Endothelial cell of umbilical vein (primary cell): ENCODE measurements at regions of chr5 and their contacts with region 1.

Region 1: DNA sequence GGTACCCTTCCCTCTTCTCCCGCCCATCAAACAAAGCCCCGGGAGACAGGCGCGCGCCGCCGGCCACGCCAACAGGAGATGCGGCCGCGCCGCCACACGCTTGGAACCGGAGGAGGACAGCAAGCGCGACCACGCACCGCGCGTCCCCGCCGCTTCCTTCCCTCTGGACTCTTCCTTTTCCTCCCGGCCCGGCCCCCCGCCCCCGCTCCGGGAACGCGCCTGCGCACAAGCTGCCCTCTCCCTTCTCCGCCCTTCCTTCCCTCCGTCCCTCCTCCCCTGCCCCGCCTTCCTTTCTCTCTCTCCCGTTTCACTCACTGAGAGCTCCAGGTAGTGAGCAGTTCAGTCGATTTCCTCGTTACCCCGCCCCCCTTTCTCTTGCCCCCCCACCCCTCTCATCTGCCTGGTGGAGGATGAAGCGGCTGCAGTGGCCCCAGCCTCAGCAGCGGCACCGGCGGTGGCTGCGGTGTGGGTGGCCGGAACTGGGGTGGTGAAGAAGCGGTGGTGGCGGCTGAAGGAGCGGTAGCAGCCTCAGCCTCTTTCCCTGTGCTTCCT is at the start of gene RASA1:
- DNase-seq: peak; percentile 92
- H3K4me3 ChIP-seq: peak within 1 kb of the TSS; percentile 89 to 92 (median 92)
- H3K27ac ChIP-seq: peak within 1 kb of the TSS; percentile 77
- H3K4me1 ChIP-seq: peaks cover 13% of the 10 kb centered on the region
- H3K27me3 ChIP-seq: peaks cover 0 to 2% of the 10 kb centered on the region in 2 experiments
- CTCF ChIP-seq: no peak
- POLR2A ChIP-seq: peak; percentile 99
- total RNA-seq, gene RASA1: 42.0 and 42.7 TPM in 2 replicates

Region 2: DNA sequence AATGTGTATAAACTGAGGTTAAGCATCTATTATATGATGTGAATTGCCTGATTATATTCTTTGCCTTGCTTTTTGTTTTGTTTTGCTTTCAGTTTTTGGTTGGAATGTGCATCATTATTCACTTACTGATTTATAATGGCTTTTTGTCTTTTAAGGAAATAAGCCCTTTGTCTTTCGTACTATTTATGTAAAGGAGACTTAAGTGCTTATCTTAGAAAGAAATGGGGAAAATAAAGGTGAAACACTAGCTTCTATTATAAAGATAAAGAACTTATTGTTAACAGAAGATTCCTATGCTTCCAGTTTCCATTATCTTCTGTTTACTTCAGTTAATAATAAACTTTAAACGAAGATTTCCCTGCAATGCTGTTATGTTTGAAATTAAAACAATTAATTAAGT is 626.7 kb before region 1 on chr5:
- CTCF ChIA-PET with region 1: no interaction called
- POLR2A ChIA-PET with region 1: no interaction called
- dilution Hi-C with region 1: no loop called
- intact Hi-C with region 1: no loop called
- DNase-seq: no peak
- H3K4me3 ChIP-seq: no peak overlapping the region
- H3K27ac ChIP-seq: no peak overlapping the region
- H3K4me1 ChIP-seq: no peaks in the 10 kb centered on the region
- H3K27me3 ChIP-seq: no peaks in the 10 kb centered on the region
- CTCF ChIP-seq: no peak
- POLR2A ChIP-seq: no peak

Region 3: DNA sequence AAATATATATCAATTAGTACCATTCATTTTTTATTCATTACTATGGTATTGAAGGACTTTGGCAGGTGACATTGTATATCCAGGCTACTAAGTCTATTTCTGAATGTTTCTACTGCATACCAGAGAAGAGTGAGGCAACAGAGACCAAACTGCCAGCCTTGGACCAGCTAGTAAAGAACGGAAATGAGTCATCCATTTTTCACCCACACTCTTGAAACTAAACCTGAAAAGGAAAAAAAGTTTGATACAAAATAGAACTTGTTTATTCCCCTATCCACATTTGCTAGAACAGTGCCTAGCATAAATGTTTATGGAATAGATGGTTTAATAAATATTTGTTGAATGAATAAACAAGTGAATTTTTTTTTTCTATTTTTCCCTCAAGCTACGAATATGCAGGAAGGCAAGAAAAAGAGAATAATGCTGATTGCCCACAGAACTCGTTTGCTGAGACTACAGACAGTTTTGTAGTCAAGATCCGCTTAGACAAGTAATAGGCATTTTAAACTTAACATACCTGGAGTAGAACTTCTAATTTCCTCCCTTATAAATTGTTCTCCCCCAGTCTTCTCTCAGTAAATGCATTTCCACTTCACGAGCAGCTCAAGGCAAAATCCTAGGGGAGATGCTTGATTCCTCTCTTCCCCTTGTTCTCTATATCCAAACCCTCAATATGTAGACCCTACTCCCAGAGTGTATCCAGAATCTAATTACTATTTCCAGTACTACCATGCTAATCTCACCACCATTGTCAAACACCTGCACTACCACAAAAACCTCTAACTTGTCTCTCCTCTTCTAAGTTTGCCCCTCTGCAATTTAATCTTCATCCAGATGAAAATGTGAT is 146.1 kb before region 1 on chr5:
- CTCF ChIA-PET with region 1: interaction called, 3 read pairs
- POLR2A ChIA-PET with region 1: interaction called, 4 read pairs
- dilution Hi-C with region 1: no loop called
- intact Hi-C with region 1: loop called (anchors 1 kb)
- DNase-seq: peak; percentile 89
- H3K4me3 ChIP-seq: peak overlapping the region in 1 of 3 experiments; percentile 2
- H3K27ac ChIP-seq: peak overlapping the region; percentile 98
- H3K4me1 ChIP-seq: peaks cover 30% of the 10 kb centered on the region
- H3K27me3 ChIP-seq: no peaks in the 10 kb centered on the region
- CTCF ChIP-seq: no peak
- POLR2A ChIP-seq: no peak

Region 4: DNA sequence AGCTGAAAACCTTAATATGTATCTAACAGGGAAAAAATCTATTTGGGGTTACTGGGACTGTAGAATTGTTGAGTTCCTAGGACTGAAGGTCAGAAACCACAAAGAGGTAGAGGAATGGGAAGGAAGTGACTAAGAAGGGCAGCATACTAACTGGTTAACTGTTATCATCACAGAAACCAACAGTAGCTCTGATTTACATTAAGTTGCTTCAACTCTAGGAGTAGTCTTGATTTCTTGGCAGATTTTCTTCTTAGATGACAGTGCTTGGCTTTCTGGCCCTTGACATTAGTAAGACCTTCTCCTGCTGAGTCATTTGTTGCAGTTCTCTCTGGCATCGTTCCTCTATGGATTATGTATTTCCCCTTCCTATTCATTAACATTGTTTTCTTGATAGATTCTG is 116.1 kb before region 1 on chr5:
- CTCF ChIA-PET with region 1: interaction called, 6 read pairs
- POLR2A ChIA-PET with region 1: interaction called, 4 read pairs
- dilution Hi-C with region 1: no loop called
- intact Hi-C with region 1: loop called (anchors 1 kb)
- DNase-seq: peak; percentile 78
- H3K4me3 ChIP-seq: no peak overlapping the region
- H3K27ac ChIP-seq: peak overlapping the region; percentile 82
- H3K4me1 ChIP-seq: peaks cover 31% of the 10 kb centered on the region
- H3K27me3 ChIP-seq: no peaks in the 10 kb centered on the region
- CTCF ChIP-seq: no peak
- POLR2A ChIP-seq: no peak

Region 5: GRCh38 chr5:87195104-87195591 is 72.5 kb before region 1 on chr5:
- CTCF ChIA-PET with region 1: no interaction called
- POLR2A ChIA-PET with region 1: interaction called, 7 read pairs
- dilution Hi-C with region 1: no loop called
- intact Hi-C with region 1: loop called (anchors 1 kb)
- DNase-seq: peak; percentile 85
- H3K4me3 ChIP-seq: peak overlapping the region in 1 of 3 experiments; percentile 40
- H3K27ac ChIP-seq: peak overlapping the region; percentile 98
- H3K4me1 ChIP-seq: peaks cover 25% of the 10 kb centered on the region
- H3K27me3 ChIP-seq: no peaks in the 10 kb centered on the region
- CTCF ChIP-seq: no peak
- POLR2A ChIP-seq: no peak

Region 6: GRCh38 chr5:87245451-87245850 is 22.2 kb before region 1 on chr5:
- CTCF ChIA-PET with region 1: no interaction called
- POLR2A ChIA-PET with region 1: interaction called, 3 read pairs
- dilution Hi-C with region 1: no loop called
- intact Hi-C with region 1: loop called (anchors 1 kb)
- DNase-seq: peak; percentile 60
- H3K4me3 ChIP-seq: no peak overlapping the region
- H3K27ac ChIP-seq: no peak overlapping the region
- H3K4me1 ChIP-seq: peaks cover 14% of the 10 kb centered on the region
- H3K27me3 ChIP-seq: no peaks in the 10 kb centered on the region
- CTCF ChIP-seq: no peak
- POLR2A ChIP-seq: no peak

Region 7: GRCh38 chr5:87393331-87393730 is 125.7 kb after region 1 on chr5:
- CTCF ChIA-PET with region 1: no interaction called
- POLR2A ChIA-PET with region 1: interaction called, 3 read pairs
- dilution Hi-C with region 1: no loop called
- intact Hi-C with region 1: loop called (anchors 1 kb)
- DNase-seq: peak; percentile 79
- H3K4me3 ChIP-seq: no peak overlapping the region
- H3K27ac ChIP-seq: peak overlapping the region; percentile 91
- H3K4me1 ChIP-seq: peaks cover 25% of the 10 kb centered on the region
- H3K27me3 ChIP-seq: no peaks in the 10 kb centered on the region
- CTCF ChIP-seq: no peak
- POLR2A ChIP-seq: no peak

Region 8: GRCh38 chr5:88005426-88005825 is 737.8 kb after region 1 on chr5:
- CTCF ChIA-PET with region 1: no interaction called
- POLR2A ChIA-PET with region 1: no interaction called
- dilution Hi-C with region 1: no loop called
- intact Hi-C with region 1: no loop called
- DNase-seq: no peak
- H3K4me3 ChIP-seq: no peak overlapping the region
- H3K27ac ChIP-seq: no peak overlapping the region
- H3K4me1 ChIP-seq: no peaks in the 10 kb centered on the region
- H3K27me3 ChIP-seq: no peaks in the 10 kb centered on the region
- CTCF ChIP-seq: no peak
- POLR2A ChIP-seq: no peak